GM12878 (cell line): ENCODE measurements at regions of chr4 and their contacts with region 1.

Region 1: GRCh38 chr4:185471235-185472102 is at the start of gene CCDC110:
- DNase-seq: peak; percentile 47
- ATAC-seq: peak; percentile 94
- H3K4me3 ChIP-seq: peak within 1 kb of the TSS; percentile 78
- H3K27ac ChIP-seq: peak within 1 kb of the TSS; percentile 81
- H3K4me1 ChIP-seq: peaks cover 13% of the 10 kb centered on the region
- H3K27me3 ChIP-seq: peaks cover 0 to 2% of the 10 kb centered on the region in 2 experiments; a peak in 1 of 4 replicates
- CTCF ChIP-seq: peak; percentile 40 to 72 (median 56); a peak in 5 of 6 replicates
- EP300 ChIP-seq: no peak
- POLR2A ChIP-seq: peak; percentile 86
- RAD21 ChIP-seq: peak; percentile 65
- polyA plus RNA-seq, gene CCDC110: 1.2 to 2.1 TPM

Region 2: DNA sequence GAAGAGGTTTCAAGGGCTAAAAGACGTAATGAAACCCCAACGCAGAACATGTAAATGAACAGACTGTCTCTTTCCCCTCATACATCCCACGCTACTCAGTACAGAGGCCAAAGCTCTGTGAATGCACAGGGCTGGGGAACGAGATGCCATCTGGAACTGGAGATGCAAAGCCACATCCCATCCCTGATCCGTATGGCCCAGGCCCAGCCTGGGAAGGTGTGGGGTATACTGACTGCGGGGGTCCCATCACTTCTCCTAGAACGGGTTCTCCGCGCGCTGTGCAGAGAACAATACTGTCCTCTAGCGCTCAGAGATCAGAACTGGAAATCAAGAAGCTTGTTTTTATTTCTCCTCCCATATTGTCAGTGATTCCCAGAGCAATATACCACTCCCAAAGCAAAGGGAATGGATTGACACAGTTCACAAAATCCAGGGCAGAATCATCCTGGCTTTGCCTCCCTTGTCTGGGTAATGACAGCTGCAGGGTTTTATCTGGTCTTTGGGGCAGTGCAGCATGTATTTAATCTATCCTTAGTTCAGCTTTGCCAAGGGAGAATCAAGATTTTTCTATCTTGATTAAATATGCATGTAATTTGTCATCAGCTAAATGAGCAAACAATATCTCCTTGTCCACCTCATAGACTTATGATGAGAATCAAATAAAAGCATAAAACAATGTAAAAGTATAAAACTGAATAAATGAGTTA is 550.1 kb after region 1 on chr4:
- CTCF ChIA-PET with region 1: no interaction called
- POLR2A ChIA-PET with region 1: no interaction called
- RAD21 ChIA-PET with region 1: no interaction called
- SMC1A ChIA-PET with region 1: no interaction called
- in situ Hi-C with region 1: no loop called
- intact Hi-C with region 1: loop called (anchors 10 kb)
- DNase-seq: no peak
- ATAC-seq: peak; percentile 64
- H3K4me3 ChIP-seq: no peak overlapping the region
- H3K27ac ChIP-seq: no peak overlapping the region
- H3K4me1 ChIP-seq: no peaks in the 10 kb centered on the region
- H3K27me3 ChIP-seq: no peaks in the 10 kb centered on the region; a peak in 2 of 4 replicates
- CTCF ChIP-seq: peak; percentile 62 to 81 (median 78)
- EP300 ChIP-seq: no peak
- POLR2A ChIP-seq: no peak
- RAD21 ChIP-seq: peak; percentile 79